Activated CD8-positive, alpha-beta T cell treated with anti-CD3 and anti-CD28 coated beads for 36 hours (primary cell): ENCODE measurements at regions of chr1 and their contacts with region 1.

Region 1: GRCh38 chr1:198174297-198174696 is 17.5 kb downstream of the NEK7 start:
- DNase-seq: peak; percentile 72
- ATAC-seq: peak; percentile 65
- H3K4me3 Mint-ChIP-seq: peak overlapping the region; percentile 59
- H3K27ac Mint-ChIP-seq: peak overlapping the region; percentile 91
- H3K4me1 Mint-ChIP-seq: peaks cover 86% of the 10 kb centered on the region
- H3K27me3 Mint-ChIP-seq: no peaks in the 10 kb centered on the region
- CTCF ChIP-seq: no peak

Region 2: DNA sequence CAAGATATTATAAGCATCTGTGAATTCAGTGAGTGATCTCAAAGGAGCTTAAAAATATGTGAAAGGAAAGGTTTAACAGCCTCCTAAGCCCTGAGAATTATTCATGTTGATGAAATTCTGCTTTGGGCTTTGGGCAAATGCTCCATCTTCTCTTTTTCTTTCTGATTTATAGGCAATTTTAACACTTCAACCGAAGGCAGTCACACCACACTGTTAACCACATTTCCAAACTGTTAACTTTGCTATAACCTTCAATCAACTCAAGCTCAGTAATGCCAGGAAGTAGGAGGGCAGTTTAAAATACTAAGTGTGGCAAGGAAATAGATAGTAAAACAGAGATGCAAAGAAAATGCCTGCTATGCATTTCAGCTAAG is 71.9 kb before region 1 on chr1:
- CTCF ChIA-PET with region 1: no interaction called
- POLR2A ChIA-PET with region 1: no interaction called
- intact Hi-C with region 1: no loop called
- DNase-seq: peak; percentile 14
- ATAC-seq: peak; percentile 75
- H3K4me3 Mint-ChIP-seq: peak overlapping the region; percentile 24
- H3K27ac Mint-ChIP-seq: peak overlapping the region; percentile 79
- H3K4me1 Mint-ChIP-seq: peaks cover 24% of the 10 kb centered on the region
- H3K27me3 Mint-ChIP-seq: no peaks in the 10 kb centered on the region
- CTCF ChIP-seq: no peak

Region 3: GRCh38 chr1:198150369-198150768 is 23.9 kb before region 1 on chr1:
- CTCF ChIA-PET with region 1: no interaction called
- POLR2A ChIA-PET with region 1: no interaction called
- intact Hi-C with region 1: no loop called
- DNase-seq: no peak
- ATAC-seq: no peak
- H3K4me3 Mint-ChIP-seq: no peak overlapping the region
- H3K27ac Mint-ChIP-seq: no peak overlapping the region
- H3K4me1 Mint-ChIP-seq: no peaks in the 10 kb centered on the region
- H3K27me3 Mint-ChIP-seq: no peaks in the 10 kb centered on the region
- CTCF ChIP-seq: no peak

Region 4: DNA sequence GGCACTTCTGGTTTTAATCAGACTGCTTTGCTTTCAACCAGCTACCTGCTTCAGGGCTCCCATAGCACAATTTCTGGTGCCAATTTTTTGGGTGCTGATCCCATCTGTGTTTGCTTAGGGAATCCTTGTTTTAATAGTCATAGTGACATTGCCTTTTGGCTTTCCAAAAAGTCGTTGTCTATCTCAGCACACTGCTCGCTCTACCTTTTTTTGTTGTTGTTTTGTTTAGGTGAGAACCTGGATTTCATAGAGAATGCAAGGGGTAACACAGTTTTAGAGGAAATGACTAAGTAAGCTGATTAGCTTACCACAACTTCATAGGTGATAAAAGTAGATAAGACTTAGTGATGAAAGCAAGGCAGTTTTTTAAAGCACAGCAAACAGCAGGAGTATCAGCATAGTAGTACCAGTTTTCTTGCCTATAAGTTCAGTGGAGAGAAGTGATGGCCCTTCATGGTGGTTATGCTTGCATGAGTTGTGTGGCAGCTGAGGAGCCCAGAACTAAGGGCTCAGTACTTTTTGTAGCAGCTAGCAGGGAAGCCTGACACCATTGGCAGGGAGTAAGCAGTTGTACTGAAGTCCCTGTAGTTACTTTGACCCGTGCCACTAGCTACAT is 13.8 kb after region 1 on chr1:
- CTCF ChIA-PET with region 1: interaction called, 10 read pairs
- POLR2A ChIA-PET with region 1: interaction called, 4 read pairs
- intact Hi-C with region 1: no loop called
- DNase-seq: no peak
- ATAC-seq: peak; percentile 78
- H3K4me3 Mint-ChIP-seq: peak overlapping the region; percentile 45
- H3K27ac Mint-ChIP-seq: peak overlapping the region; percentile 76
- H3K4me1 Mint-ChIP-seq: peaks cover 81% of the 10 kb centered on the region
- H3K27me3 Mint-ChIP-seq: no peaks in the 10 kb centered on the region
- CTCF ChIP-seq: no peak